BJ (cell line): ENCODE measurements at regions of chr17 and their contacts with region 1.

Region 1: GRCh38 chr17:27601069-27601975 is 29.7 kb upstream of the LGALS9 start:
- DNase-seq: peak; percentile 16
- H3K4me3 ChIP-seq: no peak overlapping the region
- H3K27me3 ChIP-seq: no peaks in the 10 kb centered on the region
- CTCF ChIP-seq: peak; percentile 91

Region 2: DNA sequence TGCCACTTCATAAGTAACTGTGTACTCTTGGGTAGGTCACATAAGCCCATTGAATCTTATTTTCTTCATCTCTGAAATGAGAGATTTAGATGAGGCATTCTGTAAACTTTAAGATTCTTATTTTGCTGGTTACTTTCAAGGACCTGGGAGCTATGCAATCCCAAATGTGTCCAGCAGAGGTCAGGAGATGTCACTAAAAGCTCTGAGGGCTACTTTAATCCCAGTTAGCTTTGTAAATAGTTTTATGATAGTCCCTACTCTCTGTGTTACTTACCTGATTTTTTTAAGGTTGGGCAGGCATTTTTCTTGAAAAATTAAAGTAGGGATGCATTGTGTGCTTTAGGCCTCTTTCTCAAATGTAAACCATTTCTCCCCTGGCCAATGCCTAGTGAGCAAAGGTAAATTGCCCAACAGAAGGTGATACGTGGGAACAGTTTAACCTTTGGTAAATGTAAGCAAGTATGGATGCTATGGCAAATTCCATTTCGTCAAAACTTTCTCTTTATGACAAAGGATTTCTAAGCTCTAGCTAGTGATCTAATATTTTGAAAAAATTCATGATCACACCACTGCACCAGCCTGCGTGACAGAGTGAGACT is 364.5 kb before region 1 on chr17:
- CTCF ChIA-PET with region 1: interaction called, 113 read pairs
- POLR2A ChIA-PET with region 1: no interaction called
- DNase-seq: no peak
- H3K4me3 ChIP-seq: no peak overlapping the region
- H3K27me3 ChIP-seq: no peaks in the 10 kb centered on the region
- CTCF ChIP-seq: peak; percentile 84

Region 3: GRCh38 chr17:27339836-27340550 is 261.3 kb before region 1 on chr17:
- CTCF ChIA-PET with region 1: interaction called, 231 read pairs
- POLR2A ChIA-PET with region 1: no interaction called
- DNase-seq: no peak
- H3K4me3 ChIP-seq: no peak overlapping the region
- H3K27me3 ChIP-seq: no peaks in the 10 kb centered on the region
- CTCF ChIP-seq: no peak

Region 4: DNA sequence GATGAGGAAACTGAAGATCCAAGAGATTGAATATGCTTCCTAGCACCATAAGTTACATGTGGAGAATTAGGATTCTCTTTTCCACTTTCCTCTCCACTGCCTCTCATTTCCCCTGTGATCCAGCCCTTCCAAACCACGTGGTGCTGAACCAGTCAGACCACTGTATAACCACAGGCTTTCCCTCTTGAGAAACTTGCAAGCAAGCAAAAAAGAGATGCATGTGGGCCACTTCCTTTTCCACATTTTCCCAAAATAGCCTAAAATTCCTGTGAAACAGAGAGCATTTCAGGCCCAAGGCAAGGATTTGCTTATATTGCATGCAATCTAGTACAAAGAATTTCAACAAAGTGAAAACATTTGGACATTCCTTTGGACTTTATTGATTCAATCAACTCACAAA is 204.4 kb before region 1 on chr17:
- CTCF ChIA-PET with region 1: no interaction called
- POLR2A ChIA-PET with region 1: no interaction called
- DNase-seq: peak; percentile 80
- H3K4me3 ChIP-seq: no peak overlapping the region
- H3K27me3 ChIP-seq: peaks cover 3% of the 10 kb centered on the region; the same call in 1 of the 2 replicates
- CTCF ChIP-seq: no peak

Region 5: GRCh38 chr17:27430882-27431491 is 170.3 kb before region 1 on chr17:
- CTCF ChIA-PET with region 1: interaction called, 36 read pairs
- POLR2A ChIA-PET with region 1: no interaction called
- DNase-seq: no peak
- H3K4me3 ChIP-seq: no peak overlapping the region
- H3K27me3 ChIP-seq: no peaks in the 10 kb centered on the region
- CTCF ChIP-seq: peak; percentile 85

Region 6: DNA sequence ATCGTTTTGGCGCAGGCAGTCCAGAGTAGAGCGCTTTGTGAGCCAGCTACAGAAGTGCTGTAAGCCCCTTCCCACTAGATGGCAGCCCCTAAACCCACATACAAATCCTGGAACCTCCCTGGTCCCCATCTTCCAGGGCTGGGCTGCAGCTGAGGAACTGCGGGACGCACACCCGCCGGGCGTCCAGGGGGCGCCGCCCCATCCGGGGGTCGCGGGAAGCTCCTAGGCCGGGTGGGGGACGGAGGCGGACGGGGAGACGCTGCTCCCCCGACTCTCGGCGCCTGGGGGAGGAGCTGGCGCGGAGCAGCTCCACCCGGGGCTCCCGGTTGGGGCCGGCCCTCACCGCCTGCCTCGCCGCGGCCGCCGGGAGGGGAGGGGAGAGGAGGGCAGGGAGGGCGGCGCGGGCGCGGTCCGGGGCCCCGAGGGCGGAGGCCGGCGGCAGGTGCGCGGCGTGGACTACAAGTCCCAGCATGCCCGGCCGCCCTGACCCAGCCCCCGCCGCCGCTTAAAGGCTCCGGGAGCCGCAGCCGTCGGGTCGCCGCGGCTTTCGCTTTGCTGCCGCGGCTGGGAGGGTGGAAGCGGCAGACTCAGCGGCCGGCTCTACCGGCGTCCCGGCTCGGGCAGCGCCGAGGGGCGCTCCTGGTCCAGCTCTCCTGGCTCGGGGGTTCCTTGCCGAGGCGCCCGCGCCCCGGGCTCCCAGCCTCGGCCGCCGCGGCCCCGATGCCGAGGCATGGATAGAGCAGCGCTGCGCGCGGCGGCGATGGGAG is 145.2 kb before region 1 on chr17 and contains the start of gene KSR1:
- CTCF ChIA-PET with region 1: interaction called, 77 read pairs
- POLR2A ChIA-PET with region 1: no interaction called
- DNase-seq: no peak
- H3K4me3 ChIP-seq: peak within 1 kb of the TSS; percentile 75
- H3K27me3 ChIP-seq: 0 out of 2 replicates have a peak, but pooled peaks cover 2% of the 10 kb centered on the region
- CTCF ChIP-seq: peak; percentile 50
- polyA plus RNA-seq, gene KSR1: 5.6 and 6.8 TPM in 2 replicates

Region 7: DNA sequence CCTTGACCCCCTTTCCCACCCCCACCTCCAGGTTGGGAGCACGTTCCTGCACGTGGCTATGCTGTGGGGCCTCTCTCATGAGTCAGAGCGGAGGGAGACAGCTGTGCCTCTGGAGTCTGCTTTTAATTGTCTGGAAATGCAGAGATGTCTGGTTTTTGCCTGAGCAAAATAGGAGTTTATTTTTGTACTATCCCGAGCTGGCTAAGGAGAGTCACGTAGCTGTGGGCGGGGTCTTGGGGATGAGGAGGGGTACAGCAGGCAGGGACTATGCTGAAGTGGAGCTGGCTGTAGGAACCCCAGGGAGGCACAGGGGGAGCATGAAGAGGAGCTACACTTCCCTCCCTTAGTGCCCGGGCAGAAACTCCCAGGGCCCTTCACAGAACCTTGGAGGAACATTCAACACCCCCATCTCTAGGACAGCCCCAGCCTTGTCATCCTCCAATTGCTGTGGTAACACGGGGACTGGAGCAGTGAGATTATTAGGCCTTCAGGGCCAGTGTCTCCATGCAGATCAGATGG is 15.1 kb before region 1 on chr17:
- CTCF ChIA-PET with region 1: interaction called, 64 read pairs
- POLR2A ChIA-PET with region 1: no interaction called
- DNase-seq: peak; percentile 67
- H3K4me3 ChIP-seq: no peak overlapping the region
- H3K27me3 ChIP-seq: no peaks in the 10 kb centered on the region
- CTCF ChIP-seq: no peak; the same call in 1 of the 2 replicates

Region 8: DNA sequence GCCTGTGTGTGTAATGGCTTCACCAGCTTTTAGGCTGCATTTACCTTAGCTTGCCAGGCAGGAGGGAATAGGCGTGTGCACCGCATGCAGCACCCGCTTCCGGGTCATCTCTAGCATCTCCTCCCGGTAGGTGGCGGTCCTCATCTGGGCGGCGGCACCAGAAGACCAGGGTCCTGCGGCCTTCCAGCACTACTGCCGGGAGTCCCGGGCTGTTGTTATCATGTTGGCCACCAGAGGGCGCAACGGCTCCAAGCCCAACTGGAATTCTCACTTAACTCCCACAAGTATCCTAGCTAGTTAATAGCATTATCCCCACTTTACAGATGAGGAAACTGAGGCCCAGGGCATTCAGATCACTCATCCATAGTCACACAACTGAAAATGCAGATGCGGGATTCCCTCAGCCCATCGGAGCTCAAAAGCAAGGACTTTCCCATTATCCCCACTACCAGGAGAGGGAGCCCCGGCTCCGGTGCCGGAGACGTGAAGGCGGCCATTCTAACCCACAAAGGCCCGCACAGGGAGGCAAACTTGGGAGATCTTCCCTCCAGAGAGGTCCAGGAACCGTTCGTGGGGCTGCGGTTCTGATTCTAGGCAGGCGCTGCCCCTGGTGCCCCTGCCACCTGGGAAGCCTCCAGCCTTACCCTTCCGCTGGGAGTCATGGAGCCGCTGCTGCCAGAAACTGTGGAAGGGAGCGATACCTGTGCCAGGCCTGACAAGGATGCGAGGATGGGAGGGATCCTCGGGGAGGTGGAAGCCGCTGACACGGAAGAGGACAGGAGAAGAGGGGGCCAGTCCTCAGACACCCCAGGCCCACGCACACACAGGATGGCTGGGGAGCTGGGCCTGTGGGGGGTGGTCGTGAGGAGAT is 53.6 kb after region 1 on chr17:
- CTCF ChIA-PET with region 1: interaction called, 415 read pairs
- POLR2A ChIA-PET with region 1: no interaction called
- DNase-seq: no peak
- H3K4me3 ChIP-seq: no peak overlapping the region
- H3K27me3 ChIP-seq: no peaks in the 10 kb centered on the region
- CTCF ChIP-seq: peak; percentile 82